Heart left ventricle (tissue), 16 donors: ENCODE measurements at regions of chr6 and their contacts with region 1.

Region 1: GRCh38 chr6:157873735-157874344 is 50.8 kb downstream of the SNX9 start:
- DNase-seq: peak; percentile 63 to 87 (median 71)
- ATAC-seq: peak; percentile 33 to 82 (median 76)
- H3K4me3 ChIP-seq: no peak overlapping the region
- H3K27ac ChIP-seq: no peak overlapping the region
- H3K4me1 ChIP-seq: peaks cover 0 to 6% (median under 1%) of the 10 kb centered on the region in 12 donors
- H3K27me3 ChIP-seq: no peaks in the 10 kb centered on the region
- CTCF ChIP-seq: peak; percentile 69 to 87 (median 80)
- POLR2A ChIP-seq: no peak

Region 2: GRCh38 chr6:157557559-157557958 is 316.3 kb before region 1 on chr6:
- intact Hi-C with region 1: no loop called
- DNase-seq: no peak
- ATAC-seq: no peak
- H3K4me3 ChIP-seq: no peak overlapping the region
- H3K27ac ChIP-seq: no peak overlapping the region
- H3K4me1 ChIP-seq: peaks cover 0 to 10% (median 0%) of the 10 kb centered on the region in 12 donors
- H3K27me3 ChIP-seq: no peaks in the 10 kb centered on the region
- CTCF ChIP-seq: no peak
- POLR2A ChIP-seq: no peak

Region 3: GRCh38 chr6:157756708-157757429 is 117.0 kb before region 1 on chr6:
- intact Hi-C with region 1: loop called (anchors 2 to 5 kb)
- DNase-seq: peak; percentile 85 to 92 (median 87)
- ATAC-seq: peak; percentile 84 to 91 (median 88)
- H3K4me3 ChIP-seq: peak overlapping the region in 1 of 12 donors; percentile 4
- H3K27ac ChIP-seq: peak overlapping the region in 3 of 12 donors; percentile 8 to 48 (median 45)
- H3K4me1 ChIP-seq: peaks cover 0 to 42% (median 13%) of the 10 kb centered on the region in 12 donors
- H3K27me3 ChIP-seq: no peaks in the 10 kb centered on the region
- CTCF ChIP-seq: peak; percentile 77 to 88 (median 82)
- POLR2A ChIP-seq: no peak

Region 4: GRCh38 chr6:157774153-157775135 is 99.4 kb before region 1 on chr6:
- intact Hi-C with region 1: no loop called
- DNase-seq: peak in 1 of 5 donors; percentile 14
- ATAC-seq: peak in 3 of 4 donors; percentile 36 to 85 (median 58)
- H3K4me3 ChIP-seq: no peak overlapping the region
- H3K27ac ChIP-seq: no peak overlapping the region
- H3K4me1 ChIP-seq: no peaks in the 10 kb centered on the region
- H3K27me3 ChIP-seq: peaks cover 0 to 8% (median 0%) of the 10 kb centered on the region in 9 donors
- CTCF ChIP-seq: no peak
- POLR2A ChIP-seq: no peak

Region 5: GRCh38 chr6:157823001-157823527 is 50.8 kb before region 1 on chr6 and contains the start of gene SNX9:
- intact Hi-C with region 1: loop called in 1 of 10 experiments (anchors 5 kb)
- DNase-seq: peak; percentile 85 to 92 (median 87)
- ATAC-seq: peak; percentile 77 to 96 (median 90)
- H3K4me3 ChIP-seq: peak within 1 kb of the TSS; percentile 74 to 99 (median 94)
- H3K27ac ChIP-seq: peak within 1 kb of the TSS; percentile 92 to 98 (median 96)
- H3K4me1 ChIP-seq: peaks cover 0 to 41% (median 22%) of the 10 kb centered on the region in 12 donors
- H3K27me3 ChIP-seq: no peaks in the 10 kb centered on the region
- CTCF ChIP-seq: peak in 1 of 12 donors; percentile 11
- POLR2A ChIP-seq: peak in 1 of 2 donors; percentile 60
- total RNA-seq, gene SNX9: 27.6 to 44.0 (median 32.7) TPM

Region 6: GRCh38 chr6:157830354-157831017 is 43.4 kb before region 1 on chr6:
- intact Hi-C with region 1: loop called in 1 of 10 experiments (anchors 5 kb)
- DNase-seq: no peak
- ATAC-seq: no peak
- H3K4me3 ChIP-seq: no peak overlapping the region
- H3K27ac ChIP-seq: no peak overlapping the region
- H3K4me1 ChIP-seq: peaks cover 0 to 72% (median 40%) of the 10 kb centered on the region in 12 donors
- H3K27me3 ChIP-seq: no peaks in the 10 kb centered on the region
- CTCF ChIP-seq: no peak
- POLR2A ChIP-seq: no peak